Sciatic nerve (tissue), 2 donors: ENCODE measurements at regions of chr17 and their contacts with region 1.

Region 1: DNA sequence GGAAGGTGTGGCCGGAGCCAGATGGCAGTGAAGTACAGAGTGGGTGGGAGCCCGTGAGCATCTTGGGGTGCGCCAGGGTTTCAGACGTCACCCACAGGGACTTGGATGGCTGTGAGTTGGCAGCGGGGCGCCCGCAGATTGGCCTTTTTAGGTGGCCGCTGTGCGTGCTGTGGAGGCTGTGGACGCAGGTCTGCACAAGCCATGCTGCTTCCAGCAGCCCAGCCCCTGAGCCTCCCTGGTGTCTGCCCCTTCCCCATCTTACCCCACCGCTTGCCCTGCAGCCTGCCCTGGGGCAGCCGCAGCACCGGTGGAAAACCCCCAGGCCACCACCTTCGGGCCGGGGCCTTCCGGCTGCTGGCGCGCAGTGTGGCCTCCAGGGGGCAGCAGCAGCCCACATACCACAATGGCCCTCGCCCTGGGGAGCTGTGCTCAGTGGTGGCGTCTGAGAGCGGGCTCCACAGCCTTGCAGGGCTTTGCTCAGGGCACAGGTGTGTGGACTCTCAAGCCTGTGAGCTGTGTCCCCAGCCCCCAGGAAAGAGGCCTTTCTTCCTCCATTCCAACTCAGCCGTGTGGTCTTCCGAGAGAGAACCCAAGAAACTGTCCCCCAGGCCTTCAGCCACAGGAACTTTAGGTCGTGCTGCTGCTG is 11.8 kb downstream of the ENDOV start:
- DNase-seq: peak; percentile 83
- ATAC-seq: peak; percentile 85

Region 2: GRCh38 chr17:80260069-80260554 is 166.7 kb before region 1 on chr17:
- intact Hi-C with region 1: no loop called
- DNase-seq: peak; percentile 82
- ATAC-seq: peak; percentile 57

Region 3: GRCh38 chr17:80558046-80558445 is 131.2 kb after region 1 on chr17:
- intact Hi-C with region 1: no loop called
- DNase-seq: no peak
- ATAC-seq: no peak

Region 4: GRCh38 chr17:80575057-80575875 is 148.5 kb after region 1 on chr17:
- intact Hi-C with region 1: loop called (anchors 10 kb)
- DNase-seq: peak; percentile 88
- ATAC-seq: peak; percentile 88

Region 5: DNA sequence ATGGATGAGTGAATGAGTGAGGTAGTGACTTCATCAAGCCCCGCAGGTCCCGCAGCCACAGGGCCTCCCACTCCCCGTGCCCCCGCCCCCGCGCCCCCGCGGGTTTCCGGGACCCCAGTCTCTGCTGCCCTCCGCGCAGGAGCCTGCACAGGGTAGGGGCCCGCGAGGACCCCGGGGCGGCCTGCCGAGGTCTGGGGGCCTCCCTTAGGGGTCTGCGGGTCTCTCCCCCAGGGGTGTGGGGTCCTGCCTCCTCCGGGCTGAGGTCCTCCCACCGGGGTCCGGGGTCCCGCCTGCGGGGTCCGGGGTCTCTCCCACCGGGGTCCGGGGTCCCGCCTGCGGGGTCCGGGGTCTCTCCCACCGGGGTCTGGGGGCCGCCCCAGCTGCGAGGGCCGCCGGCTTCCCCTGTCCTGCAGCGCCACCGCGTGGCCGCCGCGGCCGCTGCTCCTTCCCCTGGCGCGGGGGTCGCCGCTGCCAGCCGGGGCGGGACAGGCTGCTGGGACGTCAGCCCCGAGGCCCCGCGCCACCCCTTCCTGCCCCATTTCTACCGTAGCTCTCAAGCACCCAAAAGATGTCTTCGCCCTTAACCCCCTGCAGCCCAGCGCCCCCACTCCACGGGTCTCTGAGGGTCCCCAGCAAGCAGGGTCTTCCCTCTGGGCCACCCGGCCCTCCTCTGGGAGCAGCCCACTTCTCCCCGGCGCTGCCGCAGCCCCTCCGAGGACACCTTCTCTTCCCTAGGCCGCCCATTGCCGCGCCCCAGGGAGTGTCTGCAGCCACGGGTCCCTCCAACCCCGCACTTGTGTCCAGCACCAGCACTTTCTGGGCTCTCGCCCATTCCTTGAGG is 554.5 kb after region 1 on chr17:
- intact Hi-C with region 1: loop called (anchors 5 kb)
- DNase-seq: no peak
- ATAC-seq: no peak

Region 6: DNA sequence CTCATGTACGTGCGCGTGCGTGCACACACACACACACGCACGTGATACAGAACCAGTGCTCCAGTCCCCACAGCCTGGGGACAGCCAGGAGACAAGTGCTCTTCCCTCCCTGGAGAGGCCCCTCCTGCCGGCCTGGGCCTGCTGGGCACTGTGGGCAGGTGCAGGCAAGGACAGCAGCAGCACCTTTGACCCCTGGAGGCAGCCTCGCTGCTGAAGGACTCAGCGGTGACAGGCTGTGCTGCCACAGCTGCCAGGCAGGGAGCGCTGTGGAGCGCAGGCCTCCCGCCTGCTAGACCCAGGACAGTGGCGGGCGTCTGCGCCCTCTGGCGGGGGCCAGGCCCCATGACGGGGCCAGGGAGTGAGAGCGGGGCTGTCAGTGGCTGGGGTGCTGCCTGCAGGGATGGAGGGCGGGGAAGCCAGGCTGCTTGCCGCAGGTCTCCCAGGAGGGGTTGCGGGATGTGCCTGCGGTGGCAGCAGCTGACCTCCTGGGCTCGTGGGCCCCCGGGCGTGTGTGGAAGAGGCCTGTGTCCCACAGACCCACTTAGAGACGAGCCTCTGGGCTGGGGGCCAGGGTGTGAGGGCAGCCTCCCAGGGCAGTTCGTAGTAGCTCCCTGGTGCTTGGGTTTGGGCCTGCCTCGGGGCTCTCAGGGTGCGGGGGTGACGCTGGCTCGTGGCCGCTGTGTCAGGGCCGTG is 675.0 kb after region 1 on chr17:
- intact Hi-C with region 1: loop called (anchors 10 kb)
- DNase-seq: peak; percentile 87
- ATAC-seq: peak; percentile 77